Activated naive CD4-positive, alpha-beta T cell treated with anti-CD3 and anti-CD28 coated beads for 36 hours (primary cell): ENCODE measurements at regions of chr16 and their contacts with region 1.

Region 1: GRCh38 chr16:24668481-24669061 is 60.9 kb upstream of the TNRC6A start:
- DNase-seq: peak; percentile 83
- H3K4me3 Mint-ChIP-seq: peak overlapping the region; percentile 37
- H3K27ac Mint-ChIP-seq: peak overlapping the region; percentile 94
- H3K4me1 Mint-ChIP-seq: peaks cover 56% of the 10 kb centered on the region
- H3K27me3 Mint-ChIP-seq: peaks cover 13% of the 10 kb centered on the region

Region 2: DNA sequence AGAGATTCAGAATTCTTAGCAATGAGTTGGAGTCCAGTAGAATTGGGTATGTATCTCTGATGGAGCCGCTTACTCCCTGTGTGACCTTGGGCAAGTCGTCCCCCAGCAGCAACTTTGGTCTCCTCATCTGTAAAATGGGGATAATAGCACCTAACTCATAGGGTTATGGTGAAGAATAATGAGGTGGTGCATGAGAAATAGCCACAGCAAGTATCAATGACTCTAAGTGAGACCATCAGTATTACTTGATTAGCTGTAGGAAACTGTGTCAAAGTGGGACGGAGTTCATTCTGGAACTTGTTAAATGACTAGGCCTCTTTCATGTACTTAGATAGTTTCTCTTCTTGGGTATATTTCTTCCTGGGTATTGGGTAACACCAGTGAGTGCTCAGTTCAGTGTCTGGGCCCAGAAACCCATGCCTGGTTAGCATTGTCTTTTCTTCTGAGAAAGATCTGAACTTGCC is 826.4 kb before region 1 on chr16:
- CTCF ChIA-PET with region 1: no interaction called
- intact Hi-C with region 1: loop called (anchors 2 kb)
- DNase-seq: peak; percentile 78
- H3K4me3 Mint-ChIP-seq: no peak overlapping the region
- H3K27ac Mint-ChIP-seq: peak overlapping the region; percentile 56
- H3K4me1 Mint-ChIP-seq: peaks cover 89% of the 10 kb centered on the region
- H3K27me3 Mint-ChIP-seq: no peaks in the 10 kb centered on the region

Region 3: GRCh38 chr16:24309222-24309905 is 359.2 kb before region 1 on chr16:
- CTCF ChIA-PET with region 1: no interaction called
- intact Hi-C with region 1: no loop called
- DNase-seq: peak; percentile 72
- H3K4me3 Mint-ChIP-seq: no peak overlapping the region
- H3K27ac Mint-ChIP-seq: no peak overlapping the region
- H3K4me1 Mint-ChIP-seq: no peaks in the 10 kb centered on the region
- H3K27me3 Mint-ChIP-seq: peaks cover 13% of the 10 kb centered on the region

Region 4: DNA sequence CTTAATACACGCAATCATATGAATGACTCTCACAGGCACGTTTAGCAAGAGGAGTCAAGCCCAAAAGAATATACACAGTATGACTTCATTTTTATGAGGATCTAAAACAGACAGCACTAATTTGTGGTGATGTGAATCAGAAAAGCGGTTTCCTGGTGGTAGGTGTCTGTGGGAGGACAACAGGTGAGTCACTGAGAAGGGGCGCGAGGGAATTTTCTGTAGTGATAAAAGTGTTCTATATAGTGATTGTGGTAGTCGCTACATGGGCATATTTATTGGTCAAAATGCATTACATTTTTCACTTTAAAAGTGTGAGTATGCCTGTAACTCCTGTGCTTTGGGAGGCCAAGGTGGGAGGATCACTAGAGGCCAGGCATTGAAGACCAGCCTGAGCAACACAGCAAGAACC is 53.3 kb after region 1 on chr16:
- CTCF ChIA-PET with region 1: no interaction called
- intact Hi-C with region 1: loop called (anchors 1 kb)
- DNase-seq: peak; percentile 78
- H3K4me3 Mint-ChIP-seq: no peak overlapping the region
- H3K27ac Mint-ChIP-seq: peak overlapping the region; percentile 65
- H3K4me1 Mint-ChIP-seq: peaks cover 32% of the 10 kb centered on the region
- H3K27me3 Mint-ChIP-seq: peaks cover 7% of the 10 kb centered on the region

Region 5: DNA sequence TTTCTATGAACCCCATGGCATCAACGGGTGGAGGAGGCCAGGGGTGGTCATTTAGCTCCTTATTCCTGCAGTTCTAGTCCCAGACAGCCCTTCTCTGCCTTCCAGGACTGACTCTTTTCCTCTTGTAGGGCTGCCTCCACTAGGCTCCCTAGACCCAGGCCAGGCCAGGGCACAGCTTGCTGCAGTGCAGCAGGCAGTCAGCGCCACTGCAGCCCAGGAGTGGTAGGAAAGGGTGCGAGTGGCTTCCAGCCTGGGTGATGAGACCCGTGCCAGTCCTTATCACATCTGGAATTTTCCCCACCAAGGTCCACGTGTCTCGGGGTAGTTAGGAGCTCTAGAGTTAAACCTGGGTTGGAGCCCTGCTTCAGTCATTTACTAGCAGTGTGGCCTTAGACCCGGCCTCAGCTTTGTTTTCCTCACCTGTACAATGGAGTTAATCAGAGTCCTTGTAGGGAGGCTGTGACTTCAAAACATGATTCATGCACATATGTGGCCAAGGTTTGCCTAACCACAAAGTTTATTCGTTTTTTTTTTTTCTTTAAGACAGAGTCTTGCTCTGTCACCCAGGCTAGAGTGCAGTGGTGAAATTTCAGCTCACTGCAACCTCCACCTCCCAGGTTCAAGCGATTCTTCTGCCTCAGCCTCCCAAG is 181.8 kb after region 1 on chr16:
- CTCF ChIA-PET with region 1: no interaction called
- intact Hi-C with region 1: loop called (anchors 2 kb)
- DNase-seq: peak; percentile 12
- H3K4me3 Mint-ChIP-seq: no peak overlapping the region
- H3K27ac Mint-ChIP-seq: no peak overlapping the region
- H3K4me1 Mint-ChIP-seq: peaks cover 14% of the 10 kb centered on the region
- H3K27me3 Mint-ChIP-seq: no peaks in the 10 kb centered on the region

Region 6: DNA sequence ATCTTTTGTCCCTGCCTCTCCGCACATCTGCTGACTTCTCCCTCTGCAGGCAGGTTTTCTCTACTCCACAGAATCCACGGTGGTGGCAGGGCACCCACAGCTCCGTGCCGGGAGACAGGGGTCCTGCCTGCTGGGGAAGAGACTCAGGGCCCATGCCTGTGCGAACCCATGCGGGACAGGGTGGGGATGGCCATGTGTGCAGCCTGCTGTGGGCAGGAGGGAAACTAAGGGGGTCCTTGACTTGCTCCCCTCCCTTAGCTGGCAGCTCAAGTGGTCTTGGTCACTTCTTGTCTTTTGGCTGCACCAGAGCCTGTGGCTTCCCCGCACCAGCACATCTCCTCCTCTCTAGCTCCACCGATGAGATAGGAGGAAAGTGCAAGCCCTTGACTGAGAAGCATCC is 247.0 kb after region 1 on chr16:
- CTCF ChIA-PET with region 1: no interaction called
- intact Hi-C with region 1: no loop called
- DNase-seq: no peak
- H3K4me3 Mint-ChIP-seq: no peak overlapping the region
- H3K27ac Mint-ChIP-seq: no peak overlapping the region
- H3K4me1 Mint-ChIP-seq: no peaks in the 10 kb centered on the region
- H3K27me3 Mint-ChIP-seq: no peaks in the 10 kb centered on the region

Region 7: GRCh38 chr16:25111403-25112166 is 443.0 kb after region 1 on chr16 and contains the start of gene LCMT1:
- CTCF ChIA-PET with region 1: no interaction called
- intact Hi-C with region 1: loop called (anchors 10 kb)
- DNase-seq: peak; percentile 97
- H3K4me3 Mint-ChIP-seq: peak within 1 kb of the TSS; percentile 94
- H3K27ac Mint-ChIP-seq: peak within 1 kb of the TSS; percentile 96
- H3K4me1 Mint-ChIP-seq: peaks cover 47% of the 10 kb centered on the region
- H3K27me3 Mint-ChIP-seq: no peaks in the 10 kb centered on the region
- total RNA-seq, gene LCMT1: 34.7 to 35.3 TPM